Activated CD4-positive, alpha-beta memory T cell treated with anti-CD3 and anti-CD28 coated beads for 36 hours (primary cell): ENCODE measurements at regions of chr3 and their contacts with region 1.

Region 1: GRCh38 chr3:134929976-134930375 is 134.9 kb downstream of the EPHB1 start:
- DNase-seq: peak; percentile 19
- H3K4me3 Mint-ChIP-seq: no peak overlapping the region
- H3K27ac Mint-ChIP-seq: no peak overlapping the region
- H3K4me1 Mint-ChIP-seq: peaks cover 17% of the 10 kb centered on the region
- H3K27me3 Mint-ChIP-seq: peaks cover 9% of the 10 kb centered on the region

Region 2: GRCh38 chr3:134904241-134904771 is 25.7 kb before region 1 on chr3:
- CTCF ChIA-PET with region 1: no interaction called
- POLR2A ChIA-PET with region 1: no interaction called
- intact Hi-C with region 1: loop called (anchors 1 kb)
- DNase-seq: peak; percentile 49
- H3K4me3 Mint-ChIP-seq: no peak overlapping the region
- H3K27ac Mint-ChIP-seq: no peak overlapping the region
- H3K4me1 Mint-ChIP-seq: peaks cover 10% of the 10 kb centered on the region
- H3K27me3 Mint-ChIP-seq: peaks cover 7% of the 10 kb centered on the region